ENCODE measurements at regions of chr6 and their contacts with region 1.

Region 1: DNA sequence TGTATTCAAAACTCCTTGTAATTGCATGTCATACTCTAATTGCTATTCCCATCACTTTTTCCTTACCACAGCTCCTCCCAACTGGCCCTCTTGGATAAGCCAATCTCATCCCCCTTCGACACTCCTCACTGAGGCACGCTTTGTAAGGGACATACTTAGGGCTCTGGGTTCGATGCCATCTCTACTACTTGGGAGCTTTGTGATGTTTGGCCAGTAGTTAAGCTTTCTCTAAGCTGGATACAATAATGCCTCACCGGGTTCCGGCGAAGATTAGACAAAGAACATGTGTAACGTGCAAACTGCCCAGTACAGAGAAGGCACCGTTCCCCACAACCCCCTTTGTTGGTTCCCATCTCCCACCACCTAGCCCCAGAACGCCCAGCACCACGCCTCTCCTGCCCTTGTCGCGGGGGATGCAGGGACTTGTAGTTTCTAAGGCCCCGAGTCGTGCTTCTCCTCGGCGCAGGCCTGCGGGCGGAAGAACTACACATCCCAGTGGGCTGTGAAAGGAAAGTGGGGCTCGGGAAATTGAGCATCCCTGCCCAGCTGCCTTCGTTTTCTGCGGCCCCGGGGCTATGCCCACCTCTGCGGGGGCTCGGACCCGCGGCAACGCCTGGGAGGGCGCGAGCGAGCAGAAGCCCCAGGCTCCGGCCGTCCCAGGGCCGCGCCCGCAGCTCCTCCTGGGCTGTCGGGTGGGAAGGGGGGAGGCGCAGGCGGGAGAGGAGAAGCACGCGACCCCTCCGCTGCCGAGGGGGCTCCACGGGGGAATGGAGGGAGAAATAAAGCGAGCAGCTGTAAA is 1.1 kb upstream of the ZDHHC14 start:
- DNase-seq: peak; percentile 63 to 89 (median 84)
- ATAC-seq: peak; percentile 85
- H3K4me3 ChIP-seq: peak overlapping the region; percentile 71
- H3K4me3 Mint-ChIP-seq: peak overlapping the region; percentile 80 to 93 (median 84)
- H3K27ac ChIP-seq: peak overlapping the region; percentile 80
- H3K27ac Mint-ChIP-seq: peak overlapping the region; percentile 2 to 89 (median 78)
- H3K4me1 ChIP-seq: peaks cover 4 to 5% of the 10 kb centered on the region in 2 donors
- H3K4me1 Mint-ChIP-seq: peaks cover 7 to 35% (median 18%) of the 10 kb centered on the region in 7 donors
- H3K27me3 ChIP-seq: no peaks in the 10 kb centered on the region
- H3K27me3 Mint-ChIP-seq: peaks cover 0 to 14% (median 4%) of the 10 kb centered on the region in 5 donors

Region 2: DNA sequence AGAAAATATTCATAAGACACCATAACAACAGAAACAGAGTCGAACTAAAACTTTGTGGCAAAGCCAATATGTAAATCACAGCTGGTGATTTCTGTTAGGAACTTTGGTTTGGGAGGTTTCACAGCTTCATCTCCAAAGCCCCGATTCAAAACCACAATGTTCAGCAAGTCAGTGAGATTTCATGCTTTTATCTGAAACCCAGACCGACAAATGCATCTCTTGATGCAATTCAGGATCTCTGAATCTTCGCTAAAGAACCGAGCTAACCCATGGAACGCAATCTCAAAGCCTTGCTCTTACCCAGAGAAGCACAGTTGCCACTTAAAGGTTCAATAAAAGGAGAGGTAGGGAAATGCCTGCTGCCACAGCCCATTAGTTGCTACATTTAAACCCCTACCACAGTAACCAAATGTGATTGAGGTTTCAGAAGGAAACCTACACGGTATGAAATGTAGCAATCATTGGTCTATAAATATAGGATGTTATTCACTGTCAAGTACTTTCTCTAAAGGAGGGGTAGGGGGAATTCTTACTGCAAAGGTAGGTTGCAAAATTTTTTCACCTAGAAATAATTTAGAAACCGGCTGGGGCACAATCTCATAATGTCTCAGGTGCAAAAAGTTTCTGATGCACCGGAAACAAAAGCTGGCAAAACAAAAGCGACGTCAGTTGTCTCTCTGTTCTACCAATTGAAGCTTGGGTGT is 983.6 kb before region 1 on chr6:
- CTCF ChIA-PET with region 1: no interaction called
- POLR2A ChIA-PET with region 1: no interaction called
- intact Hi-C with region 1: loop called in 1 of 2 experiments (anchors 5 kb)
- DNase-seq: peak in 7 of 9 donors; percentile 67 to 85 (median 77)
- ATAC-seq: peak; percentile 85
- H3K4me3 ChIP-seq: peak overlapping the region; percentile 14
- H3K4me3 Mint-ChIP-seq: peak overlapping the region; percentile 49 to 95 (median 84)
- H3K27ac ChIP-seq: peak overlapping the region; percentile 85
- H3K27ac Mint-ChIP-seq: peak overlapping the region; percentile 60 to 100 (median 99)
- H3K4me1 ChIP-seq: peaks cover 16 to 67% of the 10 kb centered on the region in 2 donors
- H3K4me1 Mint-ChIP-seq: peaks cover 17 to 99% (median 89%) of the 10 kb centered on the region in 7 donors
- H3K27me3 ChIP-seq: no peaks in the 10 kb centered on the region
- H3K27me3 Mint-ChIP-seq: peaks cover 0 to 40% (median 0%) of the 10 kb centered on the region in 5 donors

Region 3: DNA sequence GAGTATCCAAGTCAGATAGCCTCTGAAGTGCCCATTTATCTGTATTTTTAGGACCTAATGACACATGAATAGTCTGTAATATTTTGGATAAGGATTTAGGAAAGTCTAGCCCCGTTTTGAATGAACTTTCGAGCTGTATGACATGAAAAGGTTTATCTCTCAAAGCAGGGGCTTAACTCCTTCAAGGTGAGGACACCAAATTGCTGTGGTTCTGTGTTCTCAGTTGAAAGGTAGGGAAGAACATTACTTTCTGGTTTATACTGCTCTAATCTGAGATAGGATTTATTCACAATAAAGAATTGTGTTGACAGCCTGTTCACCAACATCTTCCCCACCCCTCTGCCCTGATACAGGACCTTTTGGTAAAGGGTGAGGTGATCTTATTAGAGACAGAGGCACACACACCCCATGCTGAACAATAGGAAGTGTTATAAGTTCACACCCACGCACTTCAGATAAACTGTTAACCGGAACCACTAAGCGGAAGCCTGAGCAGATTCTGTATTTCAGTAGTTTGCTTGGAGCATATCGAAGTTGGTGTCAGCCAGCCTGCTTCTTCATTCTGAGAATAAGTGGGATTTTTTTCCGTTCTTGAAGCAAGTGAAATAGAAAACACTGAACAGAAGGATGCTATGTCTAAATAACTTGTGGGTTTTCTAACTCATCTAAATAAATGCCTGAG is 279.8 kb before region 1 on chr6:
- CTCF ChIA-PET with region 1: no interaction called
- POLR2A ChIA-PET with region 1: no interaction called
- intact Hi-C with region 1: no loop called
- DNase-seq: peak in 8 of 9 donors; percentile 40 to 64 (median 54)
- ATAC-seq: peak; percentile 97
- H3K4me3 ChIP-seq: peak overlapping the region; percentile 20
- H3K4me3 Mint-ChIP-seq: peak overlapping the region; percentile 8 to 89 (median 77)
- H3K27ac ChIP-seq: peak overlapping the region; percentile 60
- H3K27ac Mint-ChIP-seq: peak overlapping the region; percentile 85 to 95 (median 92)
- H3K4me1 ChIP-seq: peaks cover 22% of the 10 kb centered on the region in 2 donors
- H3K4me1 Mint-ChIP-seq: peaks cover 22 to 90% (median 79%) of the 10 kb centered on the region in 7 donors
- H3K27me3 ChIP-seq: no peaks in the 10 kb centered on the region
- H3K27me3 Mint-ChIP-seq: no peaks in the 10 kb centered on the region

Region 4: DNA sequence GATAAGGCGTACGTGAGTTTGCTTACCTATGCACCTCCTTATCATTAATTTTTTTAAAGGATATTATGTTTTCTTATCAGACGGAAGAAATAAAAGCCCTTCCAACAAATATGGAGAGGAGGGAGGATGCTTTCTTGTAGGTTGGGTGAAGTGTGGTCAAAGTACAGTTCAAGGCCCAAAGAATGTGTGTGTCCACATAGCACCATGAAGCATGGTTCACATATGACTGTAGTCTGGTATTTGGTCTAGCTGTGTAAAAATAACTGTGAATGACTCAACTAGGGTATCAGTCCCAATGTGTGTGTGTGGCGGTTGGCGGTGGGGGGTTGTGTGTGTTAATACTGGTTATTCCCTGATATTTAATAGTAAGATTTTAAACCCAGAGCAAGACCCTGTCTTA is 269.2 kb before region 1 on chr6:
- CTCF ChIA-PET with region 1: no interaction called
- POLR2A ChIA-PET with region 1: no interaction called
- intact Hi-C with region 1: no loop called
- DNase-seq: no peak
- ATAC-seq: no peak
- H3K4me3 ChIP-seq: no peak overlapping the region
- H3K4me3 Mint-ChIP-seq: no peak overlapping the region
- H3K27ac ChIP-seq: no peak overlapping the region
- H3K27ac Mint-ChIP-seq: peak overlapping the region in 2 of 9 donors; percentile 20 to 73
- H3K4me1 ChIP-seq: no peaks in the 10 kb centered on the region
- H3K4me1 Mint-ChIP-seq: peaks cover 11 to 34% (median 19%) of the 10 kb centered on the region in 7 donors
- H3K27me3 ChIP-seq: no peaks in the 10 kb centered on the region
- H3K27me3 Mint-ChIP-seq: no peaks in the 10 kb centered on the region

Region 5: GRCh38 chr6:157274471-157275226 is 105.2 kb before region 1 on chr6:
- CTCF ChIA-PET with region 1: no interaction called
- POLR2A ChIA-PET with region 1: interaction called, 3 read pairs
- intact Hi-C with region 1: loop called (anchors 1 to 2 kb)
- DNase-seq: peak; percentile 72 to 94 (median 88)
- ATAC-seq: peak; percentile 95
- H3K4me3 ChIP-seq: peak overlapping the region; percentile 80
- H3K4me3 Mint-ChIP-seq: peak overlapping the region; percentile 83 to 96 (median 92)
- H3K27ac ChIP-seq: peak overlapping the region; percentile 93
- H3K27ac Mint-ChIP-seq: peak overlapping the region; percentile 89 to 98 (median 92)
- H3K4me1 ChIP-seq: peaks cover 6 to 7% of the 10 kb centered on the region in 2 donors
- H3K4me1 Mint-ChIP-seq: peaks cover 0 to 10% (median 8%) of the 10 kb centered on the region in 7 donors
- H3K27me3 ChIP-seq: no peaks in the 10 kb centered on the region
- H3K27me3 Mint-ChIP-seq: peaks cover 0 to 15% (median 0%) of the 10 kb centered on the region in 5 donors

Region 6: DNA sequence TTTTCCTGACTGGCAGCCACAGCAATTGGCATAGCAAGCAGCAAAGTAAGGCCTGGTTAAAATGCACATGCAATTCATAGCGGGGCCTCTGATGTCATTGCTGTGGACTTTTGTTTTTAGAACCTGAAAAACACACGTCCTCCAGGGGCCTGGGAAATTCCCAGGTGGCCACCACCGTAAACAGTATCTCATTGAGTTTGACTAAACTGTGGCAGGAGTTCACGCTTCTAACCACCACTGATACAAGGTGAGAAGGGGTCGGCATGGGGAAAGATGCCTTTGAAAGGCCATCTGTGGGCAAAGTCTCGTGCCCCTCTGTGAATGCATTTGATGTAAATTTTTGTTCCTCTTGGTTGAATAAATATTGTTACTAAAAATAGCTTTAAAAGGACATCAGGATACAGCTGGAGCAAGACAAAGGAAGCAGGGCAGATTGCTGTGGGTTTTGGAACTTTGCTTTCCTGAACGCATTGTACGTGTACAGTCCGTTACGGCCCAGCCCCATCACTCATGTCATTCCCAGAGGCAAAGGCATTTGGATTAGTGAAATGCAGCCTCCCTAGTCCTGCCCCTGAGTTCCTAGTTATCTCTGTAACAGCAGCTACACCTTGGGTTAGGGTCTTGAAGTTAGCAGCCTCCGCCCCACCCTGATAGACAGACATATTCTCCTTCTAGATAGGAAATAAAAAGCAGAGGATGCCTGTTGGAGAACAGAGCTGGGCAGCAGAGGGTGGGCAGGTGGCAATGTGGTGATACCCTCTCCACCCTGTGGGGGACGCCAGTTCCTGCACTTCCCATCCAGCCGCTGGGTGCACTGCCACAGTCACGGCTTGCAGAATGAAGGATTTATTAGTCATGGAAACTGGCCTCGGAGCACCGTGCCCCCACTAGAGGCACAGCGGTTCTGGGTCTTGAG is 81.4 kb after region 1 on chr6:
- CTCF ChIA-PET with region 1: no interaction called
- POLR2A ChIA-PET with region 1: no interaction called
- intact Hi-C with region 1: loop called in 1 of 2 experiments (anchors 2 kb)
- DNase-seq: peak in 2 of 9 donors; percentile 2 to 72
- ATAC-seq: peak; percentile 71
- H3K4me3 ChIP-seq: no peak overlapping the region
- H3K4me3 Mint-ChIP-seq: peak overlapping the region in 1 of 10 donors; percentile 61
- H3K27ac ChIP-seq: no peak overlapping the region
- H3K27ac Mint-ChIP-seq: peak overlapping the region in 1 of 9 donors; percentile 88
- H3K4me1 ChIP-seq: peaks cover 3 to 10% of the 10 kb centered on the region in 2 donors
- H3K4me1 Mint-ChIP-seq: peaks cover 4 to 67% (median 5%) of the 10 kb centered on the region in 7 donors
- H3K27me3 ChIP-seq: no peaks in the 10 kb centered on the region
- H3K27me3 Mint-ChIP-seq: no peaks in the 10 kb centered on the region

Region 7: DNA sequence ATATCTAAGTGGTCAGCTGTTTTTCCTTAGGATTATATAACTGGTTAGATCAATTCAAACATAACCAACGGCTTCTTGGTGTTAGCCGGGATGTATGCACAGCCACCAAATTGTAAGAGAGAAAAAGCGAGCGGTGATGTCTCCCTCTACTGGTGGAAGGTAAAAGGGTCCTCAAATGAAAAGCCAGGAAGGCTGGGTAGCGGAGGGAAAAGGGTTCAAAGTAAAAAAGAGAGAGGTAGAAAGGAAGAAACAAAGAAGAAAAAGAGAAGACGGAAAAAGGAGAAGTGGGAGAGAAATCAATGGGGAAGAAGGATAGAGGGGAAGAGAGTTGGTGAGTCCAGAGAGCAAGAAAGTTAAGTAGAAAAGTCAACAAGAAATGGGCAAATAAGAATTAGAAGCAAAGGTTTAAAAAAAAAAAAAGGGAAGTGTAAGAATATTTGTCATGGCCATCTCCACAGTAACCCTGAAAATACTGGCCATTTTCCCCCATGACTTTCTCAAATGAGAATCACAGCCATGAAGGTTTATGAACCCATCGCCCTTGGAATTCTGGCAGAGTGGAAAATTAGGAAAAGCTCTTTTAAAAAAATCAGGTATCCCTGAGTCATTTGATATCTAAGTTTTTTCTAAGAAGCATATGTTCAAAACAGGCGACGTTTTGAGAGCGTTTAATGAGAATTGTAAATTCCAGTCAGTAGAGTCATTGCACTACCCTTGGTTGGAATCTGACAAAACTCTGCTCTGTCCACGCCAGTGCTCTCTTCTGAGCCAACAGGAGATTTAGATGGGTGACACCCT is 287.6 kb after region 1 on chr6:
- CTCF ChIA-PET with region 1: no interaction called
- POLR2A ChIA-PET with region 1: no interaction called
- intact Hi-C with region 1: loop called (anchors 1 to 5 kb)
- DNase-seq: peak in 8 of 9 donors; percentile 28 to 67 (median 54)
- ATAC-seq: peak; percentile 83
- H3K4me3 ChIP-seq: no peak overlapping the region
- H3K4me3 Mint-ChIP-seq: peak overlapping the region in 4 of 10 donors; percentile 1 to 35 (median 10)
- H3K27ac ChIP-seq: no peak overlapping the region
- H3K27ac Mint-ChIP-seq: peak overlapping the region in 7 of 9 donors; percentile 4 to 38 (median 19)
- H3K4me1 ChIP-seq: peaks cover 0 to 15% of the 10 kb centered on the region in 2 donors
- H3K4me1 Mint-ChIP-seq: peaks cover 7 to 31% (median 23%) of the 10 kb centered on the region in 7 donors
- H3K27me3 ChIP-seq: no peaks in the 10 kb centered on the region
- H3K27me3 Mint-ChIP-seq: peaks cover 0 to 6% (median 0%) of the 10 kb centered on the region in 5 donors

Region 8: DNA sequence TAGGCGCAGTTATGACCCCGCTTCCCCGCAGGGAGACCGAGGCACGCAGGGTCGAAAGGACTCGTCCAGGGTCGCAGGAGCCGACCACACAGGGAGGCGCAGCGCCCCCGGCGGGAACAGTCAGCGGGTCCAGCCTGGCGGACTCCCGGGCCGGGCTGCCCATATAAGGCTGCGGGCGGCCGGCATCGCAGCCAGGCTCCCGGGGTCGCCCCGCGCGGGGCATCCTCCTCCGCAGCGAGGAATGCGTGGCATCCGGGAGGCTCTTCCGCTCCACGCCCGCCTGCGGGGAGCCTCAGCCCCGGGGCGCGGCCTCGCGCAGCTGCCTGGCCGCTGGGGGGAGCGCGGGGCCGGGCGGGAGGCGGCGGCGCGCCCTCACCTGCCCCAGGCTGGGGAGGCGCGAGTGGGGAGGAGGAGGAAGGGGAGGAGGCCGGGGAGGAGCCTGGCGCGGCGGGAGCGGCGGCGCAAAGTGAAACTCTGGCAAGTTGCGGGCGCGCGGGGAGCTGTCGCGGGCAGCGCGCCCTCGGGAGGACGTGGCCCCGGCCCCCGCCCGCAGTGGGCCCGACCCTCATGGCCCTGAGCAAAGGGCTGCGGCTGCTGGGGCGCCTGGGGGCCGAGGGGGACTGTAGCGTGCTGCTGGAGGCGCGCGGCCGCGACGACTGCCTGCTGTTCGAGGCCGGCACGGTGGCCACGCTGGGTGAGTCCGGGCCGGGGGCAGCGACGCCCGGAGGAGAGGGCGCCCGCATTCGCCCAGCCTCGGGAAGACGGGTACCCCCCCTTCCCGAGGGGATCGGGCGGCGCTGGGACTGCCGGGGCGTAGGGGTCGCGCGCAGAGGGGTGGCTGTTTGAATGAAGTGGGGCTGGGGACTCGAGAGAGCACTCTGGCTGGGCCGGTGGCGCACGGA is 601.8 kb after region 1 on chr6 and contains the start of gene SYNJ2:
- CTCF ChIA-PET with region 1: no interaction called
- POLR2A ChIA-PET with region 1: no interaction called
- intact Hi-C with region 1: loop called (anchors 2 kb)
- DNase-seq: peak; percentile 73 to 89 (median 87)
- ATAC-seq: peak; percentile 96
- H3K4me3 ChIP-seq: peak within 1 kb of the TSS; percentile 81
- H3K4me3 Mint-ChIP-seq: peak within 1 kb of the TSS; percentile 75 to 94 (median 84)
- H3K27ac ChIP-seq: peak within 1 kb of the TSS; percentile 83
- H3K27ac Mint-ChIP-seq: peak within 1 kb of the TSS; percentile 78 to 95 (median 88)
- H3K4me1 ChIP-seq: peaks cover 27 to 38% of the 10 kb centered on the region in 2 donors
- H3K4me1 Mint-ChIP-seq: peaks cover 26 to 65% (median 55%) of the 10 kb centered on the region in 7 donors
- H3K27me3 ChIP-seq: no peaks in the 10 kb centered on the region
- H3K27me3 Mint-ChIP-seq: no peaks in the 10 kb centered on the region
- total RNA-seq, gene SYNJ2: 22.4 to 36.6 (median 22.5) TPM

Region 9: GRCh38 chr6:158686791-158687381 is 1307.0 kb after region 1 on chr6:
- CTCF ChIA-PET with region 1: no interaction called
- POLR2A ChIA-PET with region 1: no interaction called
- intact Hi-C with region 1: loop called in 1 of 2 experiments (anchors 2 kb)
- DNase-seq: peak; percentile 29 to 92 (median 87)
- ATAC-seq: peak; percentile 96
- H3K4me3 ChIP-seq: peak overlapping the region; percentile 31
- H3K4me3 Mint-ChIP-seq: peak overlapping the region; percentile 66 to 91 (median 79)
- H3K27ac ChIP-seq: peak overlapping the region; percentile 82
- H3K27ac Mint-ChIP-seq: peak overlapping the region; percentile 88 to 100 (median 98)
- H3K4me1 ChIP-seq: peaks cover 28 to 49% of the 10 kb centered on the region in 2 donors
- H3K4me1 Mint-ChIP-seq: peaks cover 36 to 76% (median 70%) of the 10 kb centered on the region in 7 donors
- H3K27me3 ChIP-seq: no peaks in the 10 kb centered on the region
- H3K27me3 Mint-ChIP-seq: no peaks in the 10 kb centered on the region

Measured in naive thymus-derived CD4-positive, alpha-beta T cell (primary cell).